ENCODE measurements at regions of chr1 and their contacts with region 1.

Region 1: GRCh38 chr1:65687428-65688214 is 105.1 kb upstream of the PDE4B start:
- H3K4me3 Mint-ChIP-seq: no peak overlapping the region
- H3K27ac Mint-ChIP-seq: no peak overlapping the region
- H3K4me1 Mint-ChIP-seq: no peaks in the 10 kb centered on the region
- H3K27me3 Mint-ChIP-seq: no peaks in the 10 kb centered on the region

Region 2: DNA sequence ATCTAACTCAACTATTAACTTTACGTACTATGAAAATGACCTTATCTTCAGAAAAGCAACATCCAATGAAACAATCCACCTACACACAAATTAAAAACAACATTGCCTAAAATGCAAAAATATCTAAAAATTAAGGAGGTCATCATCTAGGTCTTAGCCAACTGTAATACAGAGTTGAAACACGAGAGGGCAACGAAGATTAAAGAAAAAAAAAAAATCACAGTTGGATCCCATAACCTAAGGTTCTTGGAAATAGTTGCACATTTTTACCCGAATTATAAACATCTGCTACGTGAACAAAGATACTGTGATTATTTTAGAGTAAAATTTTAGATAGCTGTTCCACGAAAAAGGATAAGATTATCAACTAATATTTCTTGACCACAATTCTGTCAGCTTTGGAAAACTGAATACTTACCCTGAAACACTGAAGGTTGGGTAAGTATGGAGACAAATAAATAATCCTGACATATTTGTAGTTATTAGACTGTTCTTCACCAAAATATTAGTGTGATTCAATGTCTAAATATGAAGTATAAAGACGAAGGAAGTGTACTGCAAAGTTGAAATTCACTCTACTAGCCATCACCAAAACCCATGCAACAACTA is 627.6 kb before region 1 on chr1:
- intact Hi-C with region 1: loop called (anchors 5 kb)
- H3K4me3 Mint-ChIP-seq: no peak overlapping the region
- H3K27ac Mint-ChIP-seq: no peak overlapping the region
- H3K4me1 Mint-ChIP-seq: peaks cover 55% of the 10 kb centered on the region
- H3K27me3 Mint-ChIP-seq: no peaks in the 10 kb centered on the region

Region 3: DNA sequence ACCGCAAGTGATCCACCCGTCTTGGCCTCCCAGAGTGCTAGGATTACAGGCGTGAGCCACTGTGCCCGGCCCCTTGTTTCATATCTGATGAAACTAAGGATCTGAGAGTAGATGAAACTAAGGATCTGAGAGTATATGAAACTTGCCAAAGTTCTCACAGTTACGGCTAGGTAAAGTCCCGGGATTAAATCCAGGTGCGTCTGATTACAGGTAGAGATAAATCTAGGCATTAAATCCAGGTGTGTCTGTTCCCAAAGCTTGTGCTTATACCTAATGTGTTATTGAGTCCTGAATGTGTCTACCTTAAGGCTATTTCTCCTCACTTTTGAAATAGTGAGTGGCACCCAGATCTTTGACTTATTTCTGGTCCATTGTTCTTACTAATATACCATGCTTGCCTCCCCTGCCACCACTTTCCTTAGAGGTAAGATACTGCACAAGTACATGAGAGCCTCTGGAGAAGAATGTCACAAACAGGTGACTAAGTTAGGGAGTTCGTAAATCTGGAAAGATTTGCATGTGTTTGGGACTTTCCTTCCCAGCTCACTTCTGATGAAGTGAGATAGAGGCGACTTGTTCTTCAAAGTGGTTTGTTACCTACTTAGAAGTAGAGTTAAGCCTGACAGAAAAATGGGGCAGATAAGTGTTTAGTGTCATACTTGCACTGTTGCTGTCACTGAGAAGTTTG is 473.1 kb before region 1 on chr1:
- intact Hi-C with region 1: loop called (anchors 1 kb)
- H3K4me3 Mint-ChIP-seq: no peak overlapping the region
- H3K27ac Mint-ChIP-seq: no peak overlapping the region
- H3K4me1 Mint-ChIP-seq: peaks cover 23% of the 10 kb centered on the region
- H3K27me3 Mint-ChIP-seq: no peaks in the 10 kb centered on the region

Region 4: DNA sequence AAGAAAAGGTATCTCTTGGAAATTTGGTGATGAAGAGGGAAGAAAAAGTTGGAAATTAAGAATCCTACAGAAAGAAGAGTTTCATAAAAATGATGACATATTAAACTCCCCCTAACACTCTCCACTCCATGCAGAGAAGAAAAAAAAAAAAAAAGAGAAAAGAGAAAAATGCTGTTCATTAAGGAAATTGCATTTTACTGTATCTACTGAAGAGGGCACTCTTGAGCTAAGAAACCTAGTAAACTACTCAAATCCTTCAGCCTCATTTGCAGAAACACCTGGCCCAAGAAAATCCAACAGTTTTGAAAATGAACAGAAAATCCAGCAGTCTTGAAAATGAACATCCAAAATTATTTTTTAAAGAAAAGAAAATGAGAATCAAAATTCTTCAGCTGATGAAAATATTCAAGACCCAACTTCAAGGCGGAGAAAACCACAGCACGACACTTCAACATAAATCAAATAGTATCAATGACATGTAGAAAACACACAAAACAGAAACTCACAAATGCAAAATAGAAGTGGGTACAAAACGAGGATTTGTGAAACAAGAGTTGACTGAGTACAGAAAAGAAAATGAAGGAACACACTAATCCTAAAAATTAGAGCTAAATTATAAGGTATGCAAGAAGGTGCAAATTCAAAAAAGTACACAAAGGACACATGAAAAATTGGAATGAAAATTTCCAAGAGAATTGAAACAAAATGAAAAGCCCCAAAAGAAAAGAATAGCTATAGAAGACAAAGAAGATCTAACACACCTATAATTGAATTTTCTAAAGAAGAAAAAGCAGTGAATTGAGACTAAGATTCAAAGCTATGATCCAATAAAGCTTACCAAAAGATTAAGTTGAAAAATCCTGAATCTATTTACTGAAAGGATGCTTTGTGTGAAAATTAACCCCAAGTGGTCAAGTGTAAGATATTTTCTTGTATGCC is 451.5 kb before region 1 on chr1:
- intact Hi-C with region 1: loop called (anchors 1 kb)
- H3K4me3 Mint-ChIP-seq: no peak overlapping the region
- H3K27ac Mint-ChIP-seq: no peak overlapping the region
- H3K4me1 Mint-ChIP-seq: no peaks in the 10 kb centered on the region
- H3K27me3 Mint-ChIP-seq: no peaks in the 10 kb centered on the region

Region 5: DNA sequence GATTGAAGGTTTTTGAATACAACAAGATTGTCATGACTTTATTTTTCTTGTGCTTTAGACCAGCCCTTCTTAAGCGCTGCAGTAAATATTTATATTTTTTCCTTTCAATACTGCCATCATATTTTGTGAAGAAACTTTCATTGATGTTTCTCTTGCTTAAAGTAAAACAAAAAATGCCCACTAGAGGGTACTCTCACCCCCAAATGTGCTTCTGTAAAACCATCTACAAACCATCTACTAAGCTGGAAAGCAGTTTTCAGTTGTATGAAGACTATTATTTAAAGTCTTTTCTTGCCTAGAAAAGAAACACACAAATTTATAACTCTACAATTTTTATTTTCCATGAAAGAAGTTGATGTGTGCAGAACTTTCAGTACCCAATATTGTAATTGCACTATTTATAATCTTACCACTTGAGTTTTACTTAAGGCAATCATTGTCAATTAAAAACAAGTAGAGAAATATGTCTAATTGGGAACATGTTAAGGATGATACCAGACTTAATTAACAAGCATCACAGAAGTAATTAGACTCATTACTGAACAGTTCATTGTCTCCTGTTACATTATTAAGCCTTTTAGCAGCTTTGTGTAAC is 256.4 kb before region 1 on chr1:
- intact Hi-C with region 1: loop called (anchors 2 kb)
- H3K4me3 Mint-ChIP-seq: no peak overlapping the region
- H3K27ac Mint-ChIP-seq: no peak overlapping the region
- H3K4me1 Mint-ChIP-seq: peaks cover 18% of the 10 kb centered on the region
- H3K27me3 Mint-ChIP-seq: no peaks in the 10 kb centered on the region

Region 6: DNA sequence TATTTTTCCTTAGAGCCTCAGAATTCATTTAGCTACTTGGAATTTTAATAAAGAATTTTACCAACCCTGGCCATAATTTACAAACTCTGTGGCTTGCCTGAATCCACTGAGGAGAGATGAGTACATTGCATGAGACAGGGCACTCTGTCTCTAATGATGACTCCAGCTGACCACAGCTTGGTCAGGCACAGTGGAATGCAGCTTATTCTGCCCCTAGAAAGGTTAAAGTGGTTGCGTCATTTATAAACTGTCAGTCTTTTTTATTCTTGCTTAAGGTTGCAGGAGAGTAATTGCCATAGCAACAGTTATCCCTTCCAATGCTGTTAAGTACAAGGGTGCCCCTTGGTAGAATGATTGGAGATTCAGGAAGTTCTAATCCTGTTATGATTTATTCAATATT is 133.4 kb after region 1 on chr1:
- intact Hi-C with region 1: no loop called
- H3K4me3 Mint-ChIP-seq: no peak overlapping the region
- H3K27ac Mint-ChIP-seq: no peak overlapping the region
- H3K4me1 Mint-ChIP-seq: peaks cover 19% of the 10 kb centered on the region
- H3K27me3 Mint-ChIP-seq: peaks cover 4% of the 10 kb centered on the region